Psoas muscle (tissue), 8 donors: ENCODE measurements at regions of chr12 and their contacts with region 1.

Region 1: DNA sequence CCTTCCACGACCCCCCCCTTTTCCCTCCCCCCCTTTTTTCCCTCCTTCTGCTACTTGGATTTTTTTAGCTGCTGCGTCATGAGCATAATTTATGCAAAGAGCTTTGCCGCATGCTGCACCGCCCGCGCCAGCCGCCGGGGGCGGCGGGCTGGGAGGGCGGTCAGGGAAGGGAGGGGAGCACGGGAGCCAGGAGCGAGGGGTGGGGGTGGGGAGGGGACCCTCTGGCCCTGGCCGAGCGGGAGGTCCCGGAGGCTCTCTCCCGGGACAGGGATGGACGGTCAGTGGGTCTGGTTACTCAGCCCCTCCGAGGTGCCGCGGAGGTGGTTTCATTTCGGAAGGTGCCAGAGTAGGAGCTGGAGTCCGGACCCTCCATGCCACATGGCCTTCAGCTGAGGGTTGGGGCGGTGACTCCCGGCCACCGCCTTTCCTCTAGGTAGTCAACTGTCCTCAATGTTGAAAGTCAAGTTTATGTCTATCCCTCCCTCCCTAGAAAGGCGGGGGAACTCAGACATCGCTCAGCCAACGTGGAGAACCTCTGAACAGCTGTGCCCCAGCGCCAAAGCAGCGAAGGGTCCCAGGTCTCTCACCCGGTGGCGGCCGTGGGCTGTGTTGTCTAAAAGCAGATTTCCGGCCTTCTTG is at the start of gene POU6F1:
- DNase-seq: peak; percentile 81 to 91
- ATAC-seq: peak; percentile 93 to 94 (median 93)
- H3K4me3 ChIP-seq: peak within 1 kb of the TSS; percentile 75
- H3K27ac ChIP-seq: peak within 1 kb of the TSS; percentile 92
- H3K4me1 ChIP-seq: peaks cover 16% of the 10 kb centered on the region
- H3K27me3 ChIP-seq: no peaks in the 10 kb centered on the region
- CTCF ChIP-seq: peak; percentile 48
- total RNA-seq, gene POU6F1: 7.3 to 20.9 (median 14.5) TPM

Region 2: DNA sequence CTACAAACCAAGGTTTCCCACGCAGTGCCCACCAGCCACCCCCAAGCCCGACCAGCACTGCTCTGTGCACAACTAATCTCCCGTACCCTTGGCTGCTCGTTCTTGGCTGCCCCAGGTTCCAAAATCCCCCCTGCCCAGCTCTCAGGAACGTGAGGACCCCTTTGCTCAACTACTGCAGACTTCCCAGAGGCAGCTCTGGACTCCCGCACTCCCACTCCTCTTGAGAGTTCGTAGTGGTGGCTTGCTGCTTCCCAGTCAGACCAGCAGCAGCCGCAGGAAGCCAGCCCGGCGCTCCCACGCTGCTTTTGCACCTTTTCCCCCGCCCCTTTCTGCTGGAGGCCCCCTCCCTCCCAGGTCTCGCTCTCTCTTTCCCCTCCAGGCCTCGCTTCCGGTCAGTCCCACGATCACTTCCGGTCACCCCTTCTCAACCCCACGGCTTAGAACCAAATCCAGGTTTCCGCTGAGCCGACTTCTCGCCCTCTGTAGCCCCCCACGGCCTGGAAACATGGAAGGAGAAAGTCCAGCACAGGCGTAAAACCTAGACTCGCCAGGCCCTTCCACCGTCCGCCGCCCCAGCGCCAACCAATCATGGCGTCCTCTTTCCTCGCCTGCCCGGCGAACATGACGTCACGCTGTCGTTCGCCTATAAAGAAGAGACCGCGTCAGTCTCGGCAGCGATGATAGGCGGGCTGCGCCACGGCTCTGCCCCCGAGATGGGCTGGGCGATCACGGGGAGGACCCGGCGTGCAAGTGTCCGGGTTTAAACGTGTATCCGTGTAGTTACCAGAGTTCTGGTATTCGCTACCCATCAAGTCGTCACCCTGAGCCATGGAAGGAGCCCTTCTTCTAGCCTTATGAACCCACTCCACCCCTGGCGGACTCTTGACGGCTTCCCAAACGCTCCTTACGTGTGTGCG is 45.3 kb before region 1 on chr12 and contains the start of gene TFCP2:
- intact Hi-C with region 1: loop called (anchors 2 to 5 kb)
- DNase-seq: peak; percentile 97 to 99
- ATAC-seq: peak; percentile 97 to 99 (median 98)
- H3K4me3 ChIP-seq: peak within 1 kb of the TSS; percentile 88
- H3K27ac ChIP-seq: peak within 1 kb of the TSS; percentile 99
- H3K4me1 ChIP-seq: peaks cover 25% of the 10 kb centered on the region
- H3K27me3 ChIP-seq: no peaks in the 10 kb centered on the region
- CTCF ChIP-seq: no peak
- total RNA-seq, gene TFCP2: 15.7 to 24.6 (median 21.2) TPM

Region 3: DNA sequence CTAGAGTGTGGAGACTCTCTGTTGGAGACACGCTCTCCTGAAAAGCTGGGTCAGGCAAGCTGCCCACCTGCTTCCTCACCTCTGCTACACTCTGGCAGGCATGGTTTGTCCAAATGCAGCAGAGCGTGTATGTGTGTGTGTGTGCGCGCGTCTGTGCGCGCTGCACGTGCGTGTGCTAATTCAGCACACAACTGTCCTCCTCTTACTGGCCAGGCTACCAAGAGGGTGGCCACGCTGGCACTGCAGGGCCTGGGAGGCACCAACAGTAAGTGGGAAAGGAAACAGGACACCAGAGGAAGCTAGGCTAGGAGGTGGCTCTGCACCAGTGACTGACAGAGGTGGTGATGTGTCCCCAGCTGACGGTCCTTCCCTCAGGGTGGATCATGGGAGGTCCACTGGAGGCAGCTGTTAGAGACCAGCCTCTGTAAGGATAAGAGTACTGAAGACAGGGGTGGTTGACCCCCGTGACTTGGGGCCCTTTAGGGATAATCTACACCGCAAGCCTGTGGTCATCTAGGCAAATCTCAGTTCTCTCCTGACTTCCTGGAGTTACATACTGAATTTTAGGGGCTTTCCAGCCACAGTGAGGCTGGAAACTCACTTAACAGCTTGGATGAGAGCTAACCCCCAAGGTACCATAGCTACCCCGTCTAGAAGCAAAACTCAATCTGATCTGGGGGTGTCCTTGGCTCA is 29.6 kb before region 1 on chr12:
- intact Hi-C with region 1: loop called in 1 of 2 experiments (anchors 2 kb)
- DNase-seq: no peak
- ATAC-seq: peak; percentile 55 to 69 (median 66)
- H3K4me3 ChIP-seq: no peak overlapping the region
- H3K27ac ChIP-seq: peak overlapping the region; percentile 68
- H3K4me1 ChIP-seq: peaks cover 17% of the 10 kb centered on the region
- H3K27me3 ChIP-seq: no peaks in the 10 kb centered on the region
- CTCF ChIP-seq: no peak

Region 4: DNA sequence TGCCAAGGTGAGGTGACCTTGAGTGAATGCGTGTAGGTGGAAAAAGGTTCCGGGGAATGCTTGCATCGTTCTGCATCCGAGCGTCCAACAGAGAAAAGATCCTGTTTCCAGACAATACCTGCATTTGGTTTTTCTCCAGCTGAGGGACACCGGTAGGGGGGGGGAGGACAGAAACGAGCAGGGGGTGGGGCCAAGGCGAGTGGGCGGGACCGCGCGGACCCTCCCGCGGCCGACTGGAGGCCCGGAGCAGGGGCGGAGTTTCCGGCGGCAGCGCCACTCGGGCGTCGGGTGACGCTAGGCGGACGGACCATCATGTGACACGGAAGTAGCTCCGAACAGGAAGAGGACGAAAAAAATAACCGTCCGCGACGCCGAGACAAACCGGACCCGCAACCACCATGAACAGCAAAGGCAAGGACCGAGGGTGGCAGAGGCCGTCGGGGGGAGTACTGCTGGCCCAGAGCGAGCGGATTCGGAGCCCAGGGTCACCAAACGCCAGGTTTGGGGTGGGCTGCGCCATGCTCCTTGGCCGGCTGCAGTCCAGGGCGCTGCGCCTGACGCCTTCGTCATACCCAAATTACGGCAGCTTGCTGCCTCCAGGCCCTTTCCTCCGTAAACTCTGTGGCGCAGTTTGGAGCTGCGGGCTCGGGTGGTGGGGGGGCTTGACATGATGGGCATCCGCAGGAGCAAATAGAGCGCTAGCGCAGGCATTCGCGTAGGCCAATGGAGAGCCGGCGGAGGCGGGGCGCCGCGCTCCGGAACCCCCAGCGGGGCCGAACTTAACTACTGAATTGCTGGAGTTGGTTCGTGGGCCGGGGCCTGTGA is 20.6 kb after region 1 on chr12 and contains the start of gene DAZAP2:
- intact Hi-C with region 1: loop called (anchors 1 to 2 kb)
- DNase-seq: peak; percentile 95 to 98
- ATAC-seq: peak; percentile 98 to 99 (median 98)
- H3K4me3 ChIP-seq: peak within 1 kb of the TSS; percentile 100
- H3K27ac ChIP-seq: peak within 1 kb of the TSS; percentile 100
- H3K4me1 ChIP-seq: peaks cover 27% of the 10 kb centered on the region
- H3K27me3 ChIP-seq: no peaks in the 10 kb centered on the region
- CTCF ChIP-seq: peak; percentile 28
- total RNA-seq, gene DAZAP2: 62.4 to 157 (median 105) TPM